H1 (cell line): ENCODE measurements at regions of chr22 and their contacts with region 1.

Region 1: DNA sequence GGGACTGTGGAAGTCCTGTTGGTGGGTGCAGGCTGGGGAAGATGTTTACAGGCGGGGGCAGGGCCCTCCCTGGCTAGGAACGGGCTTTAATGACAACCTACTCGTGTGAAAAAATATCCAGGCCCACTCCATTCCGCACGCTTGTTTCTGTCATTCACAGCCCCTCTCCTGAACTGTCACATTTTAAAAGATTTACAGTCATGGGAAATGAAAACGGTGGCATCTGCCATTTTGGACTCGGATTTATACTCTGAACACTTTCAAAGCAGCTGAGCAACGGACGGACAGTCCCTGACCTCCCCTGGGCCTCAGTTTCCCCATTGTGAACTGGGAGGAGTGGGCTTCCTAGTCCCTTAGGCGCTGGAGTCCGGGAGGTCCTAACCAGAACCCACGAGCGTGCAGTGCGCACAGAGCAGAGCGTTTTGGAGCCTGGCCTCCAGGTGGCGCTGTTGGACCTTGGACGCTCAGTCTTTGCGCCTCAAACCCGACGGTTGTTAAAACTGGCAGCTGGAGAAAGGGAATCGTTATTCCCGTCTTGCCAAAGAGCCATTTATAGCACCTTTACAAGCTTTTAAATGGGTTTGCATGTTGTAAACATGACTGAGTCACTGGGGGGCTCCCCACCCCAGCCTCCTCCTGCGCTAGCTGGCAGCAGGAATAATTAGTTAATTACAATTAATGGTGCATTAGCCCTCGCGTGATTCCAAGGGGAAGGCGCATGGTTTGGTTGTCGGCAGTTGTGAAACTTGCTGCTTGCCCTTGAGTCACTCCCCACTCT is 75.3 kb downstream of the FBLN1 start:
- DNase-seq: peak; percentile 59 to 97
- H3K4me3 ChIP-seq: no peak overlapping the region
- H3K27ac ChIP-seq: no peak overlapping the region
- H3K4me1 ChIP-seq: no peaks in the 10 kb centered on the region
- H3K27me3 ChIP-seq: no peaks in the 10 kb centered on the region
- CTCF ChIP-seq: peak; percentile 90 to 95 (median 94)
- EP300 ChIP-seq: no peak
- POLR2A ChIP-seq: no peak
- RAD21 ChIP-seq: peak; percentile 98 to 99

Region 2: DNA sequence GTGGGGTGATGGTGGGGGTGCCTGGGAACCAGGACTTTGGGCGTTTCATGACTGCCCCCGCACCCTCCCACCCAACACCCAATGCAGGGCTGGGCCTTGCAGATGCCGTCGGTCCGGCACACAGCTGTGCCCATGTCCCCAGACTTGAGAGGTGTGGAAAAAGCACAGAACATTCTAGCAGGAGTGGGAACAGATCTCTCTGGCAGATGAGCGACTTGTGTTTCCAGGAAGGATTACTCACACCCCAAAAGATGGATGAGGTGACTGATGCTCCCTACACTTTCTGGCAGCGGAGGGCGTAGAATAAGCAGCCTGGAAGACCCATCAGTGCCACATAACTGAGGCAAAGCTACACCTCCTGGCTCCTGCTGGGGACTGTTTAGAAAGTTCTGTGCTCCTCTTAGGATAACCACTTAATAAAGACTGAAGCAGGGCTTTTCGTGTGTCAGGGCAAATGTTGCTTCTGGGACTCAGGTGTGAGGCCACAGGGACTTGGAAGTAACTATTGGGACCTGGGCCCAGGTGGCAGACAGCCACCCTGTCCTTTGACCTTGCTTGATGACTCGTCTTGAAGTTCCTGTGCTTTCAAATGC is 51.1 kb before region 1 on chr22:
- CTCF ChIA-PET with region 1: no interaction called
- POLR2A ChIA-PET with region 1: no interaction called
- DNase-seq: no peak
- H3K4me3 ChIP-seq: no peak overlapping the region
- H3K27ac ChIP-seq: no peak overlapping the region
- H3K4me1 ChIP-seq: no peaks in the 10 kb centered on the region
- H3K27me3 ChIP-seq: no peaks in the 10 kb centered on the region
- CTCF ChIP-seq: no peak
- EP300 ChIP-seq: no peak
- POLR2A ChIP-seq: no peak
- RAD21 ChIP-seq: no peak

Region 3: GRCh38 chr22:45564349-45565032 is 13.4 kb before region 1 on chr22:
- CTCF ChIA-PET with region 1: interaction called, 15 read pairs
- POLR2A ChIA-PET with region 1: no interaction called
- DNase-seq: no peak
- H3K4me3 ChIP-seq: no peak overlapping the region
- H3K27ac ChIP-seq: no peak overlapping the region
- H3K4me1 ChIP-seq: peaks cover 0 to 10% (median 1%) of the 10 kb centered on the region in 4 experiments; a peak in 2 of 7 replicates
- H3K27me3 ChIP-seq: no peaks in the 10 kb centered on the region; a peak in 2 of 7 replicates
- CTCF ChIP-seq: no peak
- EP300 ChIP-seq: no peak
- POLR2A ChIP-seq: no peak
- RAD21 ChIP-seq: no peak

Region 4: GRCh38 chr22:45629469-45630089 is 51.6 kb after region 1 on chr22:
- CTCF ChIA-PET with region 1: interaction called, 14 read pairs
- POLR2A ChIA-PET with region 1: no interaction called
- DNase-seq: no peak
- H3K4me3 ChIP-seq: no peak overlapping the region
- H3K27ac ChIP-seq: no peak overlapping the region
- H3K4me1 ChIP-seq: peaks cover 22 to 31% (median 28%) of the 10 kb centered on the region in 4 experiments
- H3K27me3 ChIP-seq: no peaks in the 10 kb centered on the region; a peak in 3 of 7 replicates
- CTCF ChIP-seq: no peak
- EP300 ChIP-seq: no peak
- POLR2A ChIP-seq: no peak
- RAD21 ChIP-seq: no peak

Region 5: GRCh38 chr22:45731798-45732495 is 154.0 kb after region 1 on chr22:
- CTCF ChIA-PET with region 1: interaction called, 10 read pairs
- POLR2A ChIA-PET with region 1: no interaction called
- DNase-seq: no peak
- H3K4me3 ChIP-seq: no peak overlapping the region
- H3K27ac ChIP-seq: no peak overlapping the region
- H3K4me1 ChIP-seq: no peaks in the 10 kb centered on the region
- H3K27me3 ChIP-seq: no peaks in the 10 kb centered on the region
- CTCF ChIP-seq: peak in 2 of 3 experiments; percentile 40; a peak in 2 of 4 replicates
- EP300 ChIP-seq: no peak
- POLR2A ChIP-seq: no peak
- RAD21 ChIP-seq: peak; percentile 40 to 50